Heart left ventricle (tissue), 16 donors: ENCODE measurements at regions of chr11 and their contacts with region 1.

Region 1: GRCh38 chr11:65700391-65700790 is 11.7 kb upstream of the KAT5 start:
- DNase-seq: no peak
- ATAC-seq: no peak
- H3K4me3 ChIP-seq: no peak overlapping the region
- H3K27ac ChIP-seq: no peak overlapping the region
- H3K4me1 ChIP-seq: peaks cover 0 to 17% (median under 1%) of the 10 kb centered on the region in 12 donors
- H3K27me3 ChIP-seq: peaks cover 0 to 4% (median 0%) of the 10 kb centered on the region in 9 donors
- CTCF ChIP-seq: no peak
- POLR2A ChIP-seq: no peak

Region 2: DNA sequence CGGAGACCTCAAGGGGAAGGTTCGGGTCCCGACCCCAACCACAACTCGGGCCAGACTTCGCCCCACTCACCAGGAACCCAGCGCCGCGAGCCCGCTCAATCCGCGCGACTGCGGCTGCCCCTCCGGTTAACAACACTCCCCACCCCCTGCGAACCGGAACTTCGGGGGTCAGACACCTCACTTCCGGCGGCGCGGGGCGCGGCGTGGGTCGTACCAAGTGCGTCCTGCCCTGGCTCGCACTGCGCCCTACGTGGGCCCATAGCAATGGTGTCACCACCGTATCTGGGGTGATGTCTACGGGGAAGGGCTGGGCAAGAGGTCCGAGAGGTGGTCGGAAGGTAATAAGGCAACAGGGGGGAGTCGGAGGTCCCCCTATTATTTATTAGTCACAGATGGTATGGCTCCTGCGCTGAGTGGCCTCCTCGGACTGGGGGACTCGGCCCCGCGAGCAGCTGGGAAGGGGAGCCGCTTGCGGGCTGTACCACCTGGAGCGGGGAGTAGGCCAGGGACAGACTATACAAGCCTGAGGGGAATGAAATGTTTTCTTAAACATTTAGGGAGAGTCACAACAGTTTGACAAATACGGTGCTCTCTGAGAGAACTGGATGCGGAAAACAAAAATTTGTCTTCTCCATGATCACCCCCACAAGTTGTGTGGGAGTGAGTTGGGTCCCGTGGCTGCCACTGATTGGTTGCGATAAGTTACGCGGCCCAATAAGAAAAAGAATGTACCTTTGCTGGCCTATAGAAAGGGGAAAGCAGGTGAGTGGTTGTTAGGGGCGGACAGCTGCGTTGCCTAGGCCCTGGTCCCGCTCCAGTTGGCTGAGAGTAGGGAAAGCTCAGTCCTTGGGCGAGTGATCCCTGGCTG is 565.8 kb before region 1 on chr11 and contains the start of gene SYVN1:
- intact Hi-C with region 1: no loop called
- DNase-seq: peak; percentile 91 to 95 (median 93)
- ATAC-seq: peak; percentile 90 to 95 (median 92)
- H3K4me3 ChIP-seq: peak within 1 kb of the TSS; percentile 63 to 98 (median 89)
- H3K27ac ChIP-seq: peak within 1 kb of the TSS; percentile 94 to 99 (median 98)
- H3K4me1 ChIP-seq: peaks cover 0 to 34% (median 26%) of the 10 kb centered on the region in 12 donors
- H3K27me3 ChIP-seq: no peaks in the 10 kb centered on the region
- CTCF ChIP-seq: no peak
- POLR2A ChIP-seq: peak; percentile 57 to 85
- total RNA-seq, gene SYVN1: 21.7 to 65.8 (median 28.2) TPM

Region 3: GRCh38 chr11:65625628-65626342 is 74.6 kb before region 1 on chr11:
- intact Hi-C with region 1: loop called in 4 of 10 experiments (anchors 5 to 10 kb)
- DNase-seq: peak; percentile 64 to 84 (median 71)
- ATAC-seq: peak; percentile 57 to 82 (median 74)
- H3K4me3 ChIP-seq: no peak overlapping the region
- H3K27ac ChIP-seq: no peak overlapping the region
- H3K4me1 ChIP-seq: peaks cover 0 to 19% (median 6%) of the 10 kb centered on the region in 12 donors
- H3K27me3 ChIP-seq: no peaks in the 10 kb centered on the region
- CTCF ChIP-seq: peak; percentile 51 to 75 (median 68)
- POLR2A ChIP-seq: no peak

Region 4: GRCh38 chr11:65637794-65638317 is 62.5 kb before region 1 on chr11 and contains the start of gene SIPA1:
- intact Hi-C with region 1: loop called in 1 of 10 experiments (anchors 10 kb)
- DNase-seq: peak; percentile 85 to 91 (median 86)
- ATAC-seq: peak; percentile 70 to 86 (median 82)
- H3K4me3 ChIP-seq: peak within 1 kb of the TSS; percentile 47 to 95 (median 81)
- H3K27ac ChIP-seq: peak within 1 kb of the TSS; percentile 85 to 99 (median 94)
- H3K4me1 ChIP-seq: peaks cover 0 to 68% (median 39%) of the 10 kb centered on the region in 12 donors
- H3K27me3 ChIP-seq: no peaks in the 10 kb centered on the region
- CTCF ChIP-seq: peak in 11 of 12 donors; percentile 29 to 69 (median 56)
- POLR2A ChIP-seq: peak in 1 of 2 donors; percentile 93
- total RNA-seq, gene SIPA1: 17.0 to 63.3 (median 21.6) TPM

Region 5: DNA sequence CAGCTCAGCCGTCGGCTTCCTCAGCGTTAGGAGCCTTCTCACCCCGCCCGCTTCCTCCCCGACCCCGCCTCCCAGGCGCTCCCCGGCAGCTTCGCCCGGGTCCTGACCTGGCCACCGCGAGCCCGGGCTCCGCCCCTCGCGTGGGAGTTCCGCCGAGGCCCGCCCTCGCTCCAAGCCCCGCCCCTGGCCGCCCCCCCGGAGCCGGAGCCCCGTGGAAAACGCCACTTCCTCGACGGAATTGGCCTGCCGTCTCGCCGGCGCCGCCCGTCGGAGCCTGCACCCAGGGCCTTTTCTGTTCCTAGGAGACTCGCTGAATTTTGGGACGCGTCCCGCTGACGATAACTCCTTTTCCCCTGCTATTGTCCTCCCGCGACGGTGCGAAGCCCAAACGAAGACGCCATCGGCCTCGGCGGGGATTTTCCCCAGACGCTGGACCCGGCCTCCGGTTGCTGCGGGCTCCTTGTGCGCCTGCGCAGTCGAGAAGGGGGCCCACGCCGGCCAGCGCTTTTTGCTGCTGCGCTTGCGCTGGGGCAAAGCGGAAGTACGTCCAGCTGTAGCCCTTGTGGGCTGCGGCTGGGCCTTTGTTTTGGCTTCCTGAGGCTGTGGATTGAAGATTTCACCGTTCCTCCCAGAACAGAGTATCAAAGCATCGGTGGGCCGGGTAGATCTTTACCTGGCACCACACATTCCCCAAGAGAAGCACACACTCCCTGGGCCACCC is 47.7 kb before region 1 on chr11:
- intact Hi-C with region 1: no loop called
- DNase-seq: peak; percentile 96 to 98 (median 97)
- ATAC-seq: peak; percentile 82 to 93 (median 90)
- H3K4me3 ChIP-seq: peak overlapping the region; percentile 1 to 66 (median 60)
- H3K27ac ChIP-seq: peak overlapping the region; percentile 89 to 99 (median 96)
- H3K4me1 ChIP-seq: peaks cover 8 to 65% (median 40%) of the 10 kb centered on the region in 12 donors
- H3K27me3 ChIP-seq: no peaks in the 10 kb centered on the region
- CTCF ChIP-seq: peak in 2 of 12 donors; percentile 17 to 22
- POLR2A ChIP-seq: peak in 1 of 2 donors; percentile 72

Region 6: DNA sequence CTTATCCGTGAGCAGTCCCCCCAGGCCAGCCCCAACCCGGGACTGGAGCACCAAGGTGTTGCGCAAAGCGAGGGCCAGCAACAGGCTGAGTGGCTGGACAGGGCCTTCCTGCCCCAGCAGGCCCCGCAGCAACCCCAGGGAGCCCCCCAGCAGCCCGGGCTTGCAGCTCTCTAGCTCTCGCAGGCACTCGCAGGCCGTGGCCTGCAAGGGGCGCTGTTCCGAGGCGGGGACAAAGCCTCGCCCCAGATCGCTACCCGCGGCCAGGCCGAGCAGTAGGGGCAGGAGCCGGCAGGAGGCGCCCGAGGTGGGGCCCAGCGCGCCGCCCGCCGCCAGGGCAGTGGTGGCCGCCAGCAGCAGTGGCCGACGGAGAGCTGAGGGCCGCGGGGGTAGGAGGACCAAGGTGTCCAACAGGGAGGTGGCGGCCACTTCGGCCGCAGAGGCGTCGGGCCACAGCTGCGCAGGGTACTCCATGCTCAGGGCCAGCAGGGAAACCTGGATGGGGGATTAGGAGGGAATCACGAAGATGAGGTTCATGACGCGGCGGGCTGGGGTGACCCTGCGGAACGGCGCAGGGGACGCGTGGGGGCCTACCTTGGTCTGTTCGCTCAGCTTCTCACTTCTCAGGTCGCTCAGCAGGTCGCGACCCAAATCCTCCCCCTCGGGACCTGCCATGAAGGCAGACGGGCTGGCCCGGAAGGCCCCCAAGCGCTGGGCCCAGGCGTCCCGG is 79.6 kb after region 1 on chr11:
- intact Hi-C with region 1: loop called in 1 of 10 experiments (anchors 10 kb)
- DNase-seq: peak; percentile 72 to 92 (median 80)
- ATAC-seq: peak; percentile 47 to 92 (median 86)
- H3K4me3 ChIP-seq: peak overlapping the region; percentile 67 to 98 (median 87)
- H3K27ac ChIP-seq: peak overlapping the region in 11 of 12 donors; percentile 52 to 86 (median 73)
- H3K4me1 ChIP-seq: peaks cover 0 to 54% (median 12%) of the 10 kb centered on the region in 12 donors
- H3K27me3 ChIP-seq: peaks cover 0 to 6% (median 2%) of the 10 kb centered on the region in 9 donors
- CTCF ChIP-seq: peak; percentile 80 to 97 (median 93)
- POLR2A ChIP-seq: no peak

Region 7: GRCh38 chr11:65802841-65803240 is 102.5 kb after region 1 on chr11:
- intact Hi-C with region 1: no loop called
- DNase-seq: peak in 1 of 5 donors; percentile 17
- ATAC-seq: no peak
- H3K4me3 ChIP-seq: no peak overlapping the region
- H3K27ac ChIP-seq: no peak overlapping the region
- H3K4me1 ChIP-seq: no peaks in the 10 kb centered on the region
- H3K27me3 ChIP-seq: peaks cover 8 to 80% (median 29%) of the 10 kb centered on the region in 9 donors
- CTCF ChIP-seq: no peak
- POLR2A ChIP-seq: no peak

Region 8: DNA sequence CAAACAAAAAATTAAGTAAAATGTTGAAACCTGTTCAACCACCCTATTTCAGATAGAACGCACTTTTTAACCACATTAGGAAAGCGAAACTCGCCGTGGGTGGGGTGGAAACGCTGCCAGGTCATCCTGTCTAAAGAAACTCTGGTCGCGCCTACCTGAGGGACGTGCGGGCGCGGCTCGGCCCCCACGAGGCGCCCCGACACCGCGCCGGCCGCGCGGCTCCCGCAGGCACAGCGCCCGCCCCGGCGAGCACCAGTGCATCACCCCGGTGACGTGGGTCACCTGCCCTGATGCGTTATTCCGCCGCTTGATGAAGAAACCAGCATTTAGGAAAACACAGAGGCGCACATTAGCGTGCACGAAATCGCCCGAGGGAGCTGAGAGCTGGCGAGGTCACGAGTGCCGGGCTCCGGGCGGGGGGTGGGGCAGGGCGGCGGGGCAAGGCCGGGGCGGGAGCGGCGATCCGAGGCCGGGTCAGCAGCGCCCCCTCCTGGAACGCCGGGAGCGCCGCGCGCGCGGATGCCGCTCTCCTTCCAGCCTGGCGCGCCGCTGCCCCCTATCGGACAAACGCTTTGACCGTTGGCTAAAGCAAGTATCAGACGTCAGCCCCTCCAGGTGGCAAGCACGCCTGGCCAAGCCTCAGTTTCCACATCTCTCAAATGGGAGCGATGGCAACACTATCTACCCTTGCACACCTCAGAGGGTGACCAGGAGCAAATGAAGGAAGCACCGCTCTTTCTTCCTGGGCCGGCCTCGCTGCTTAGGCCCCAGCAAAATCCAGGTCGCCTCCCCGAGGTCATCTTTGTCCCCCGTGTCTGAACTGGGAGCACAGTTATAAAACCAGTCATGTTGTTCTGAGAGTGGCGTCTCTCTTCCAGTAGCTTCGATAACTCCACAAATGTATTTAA is 117.7 kb after region 1 on chr11:
- intact Hi-C with region 1: loop called in 1 of 10 experiments (anchors 5 kb)
- DNase-seq: peak; percentile 92 to 97 (median 94)
- ATAC-seq: peak; percentile 62 to 98 (median 96)
- H3K4me3 ChIP-seq: peak overlapping the region; percentile 31 to 83 (median 67)
- H3K27ac ChIP-seq: peak overlapping the region in 11 of 12 donors; percentile 33 to 86 (median 62)
- H3K4me1 ChIP-seq: peaks cover 0 to 25% (median 5%) of the 10 kb centered on the region in 12 donors
- H3K27me3 ChIP-seq: no peaks in the 10 kb centered on the region
- CTCF ChIP-seq: peak in 11 of 12 donors; percentile 98 to 100 (median 100)
- POLR2A ChIP-seq: no peak

Region 9: DNA sequence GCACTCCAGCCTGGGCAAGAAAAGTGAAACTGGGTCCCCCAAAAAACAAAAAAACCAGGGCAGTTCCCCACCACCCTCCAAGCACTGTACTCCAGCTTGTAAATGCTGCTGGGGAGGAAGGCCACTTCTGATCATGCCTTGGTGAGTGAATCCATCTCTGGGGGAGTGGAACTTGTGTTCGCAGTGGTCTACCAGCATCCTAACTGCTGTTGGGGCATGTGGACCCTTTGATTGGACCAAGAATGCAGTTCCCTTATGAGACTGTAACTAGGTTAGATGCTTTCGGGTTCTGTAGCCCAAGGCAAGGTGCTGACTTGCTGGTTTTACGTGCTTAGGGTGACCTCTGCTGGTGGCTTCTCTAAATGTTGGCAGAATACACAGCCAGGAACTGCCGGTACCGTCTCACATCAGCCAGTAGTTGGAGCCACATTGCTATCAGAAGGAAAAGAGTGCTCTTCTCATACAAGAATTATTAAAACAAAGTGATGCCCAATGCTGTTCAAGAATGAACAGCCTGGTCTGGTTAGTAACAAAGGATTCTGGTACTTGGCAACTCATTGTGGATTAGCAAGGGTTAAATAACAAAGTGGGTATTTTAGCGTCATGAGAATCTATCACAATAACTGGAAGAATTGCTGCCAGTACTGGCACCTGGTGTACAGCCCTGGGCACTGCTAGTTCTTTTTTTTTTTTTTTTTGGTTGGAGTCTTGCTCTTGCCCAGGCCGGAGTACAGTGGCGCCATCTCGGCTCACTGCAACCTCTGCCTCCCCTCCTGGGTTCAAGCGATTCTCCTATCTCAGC is 288.6 kb after region 1 on chr11:
- intact Hi-C with region 1: loop called in 3 of 10 experiments (anchors 5 to 10 kb)
- DNase-seq: peak in 4 of 5 donors; percentile 86 to 89 (median 88)
- ATAC-seq: peak; percentile 95 to 98 (median 98)
- H3K4me3 ChIP-seq: no peak overlapping the region
- H3K27ac ChIP-seq: peak overlapping the region in 1 of 12 donors; percentile 43
- H3K4me1 ChIP-seq: peaks cover 0 to 6% (median 0%) of the 10 kb centered on the region in 12 donors
- H3K27me3 ChIP-seq: no peaks in the 10 kb centered on the region
- CTCF ChIP-seq: peak; percentile 85 to 98 (median 92)
- POLR2A ChIP-seq: no peak